Activated naive CD4-positive, alpha-beta T cell treated with anti-CD3 and anti-CD28 coated beads for 36 hours (primary cell): ENCODE measurements at regions of chr3 and their contacts with region 1.

Region 1: GRCh38 chr3:169863458-169863899 is 6.3 kb downstream of the LRRC31 start:
- DNase-seq: peak; percentile 86
- H3K4me3 Mint-ChIP-seq: no peak overlapping the region
- H3K27ac Mint-ChIP-seq: no peak overlapping the region
- H3K4me1 Mint-ChIP-seq: peaks cover 25% of the 10 kb centered on the region
- H3K27me3 Mint-ChIP-seq: no peaks in the 10 kb centered on the region

Region 2: DNA sequence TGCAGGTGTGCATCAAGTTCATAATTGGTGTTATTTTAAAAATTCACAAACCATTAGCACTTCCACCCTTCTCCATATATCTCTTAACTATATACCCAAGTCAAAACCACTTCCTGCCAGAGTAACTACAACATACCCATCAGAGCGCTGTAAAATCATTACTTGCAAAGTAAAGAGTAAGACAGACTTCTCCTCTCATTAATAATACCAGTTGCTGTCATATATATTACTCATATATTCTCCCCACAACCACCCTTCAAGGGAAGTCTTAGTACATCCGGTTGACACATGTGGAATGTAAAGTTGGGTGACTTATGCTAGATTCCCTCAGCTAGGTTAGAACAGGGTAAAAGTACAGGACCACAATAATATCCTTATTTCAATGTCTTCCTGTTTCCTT is 104.2 kb before region 1 on chr3:
- CTCF ChIA-PET with region 1: interaction called, 4 read pairs
- intact Hi-C with region 1: loop called (anchors 1 kb)
- DNase-seq: peak; percentile 24
- H3K4me3 Mint-ChIP-seq: no peak overlapping the region
- H3K27ac Mint-ChIP-seq: peak overlapping the region; percentile 62
- H3K4me1 Mint-ChIP-seq: peaks cover 25% of the 10 kb centered on the region
- H3K27me3 Mint-ChIP-seq: no peaks in the 10 kb centered on the region

Region 3: DNA sequence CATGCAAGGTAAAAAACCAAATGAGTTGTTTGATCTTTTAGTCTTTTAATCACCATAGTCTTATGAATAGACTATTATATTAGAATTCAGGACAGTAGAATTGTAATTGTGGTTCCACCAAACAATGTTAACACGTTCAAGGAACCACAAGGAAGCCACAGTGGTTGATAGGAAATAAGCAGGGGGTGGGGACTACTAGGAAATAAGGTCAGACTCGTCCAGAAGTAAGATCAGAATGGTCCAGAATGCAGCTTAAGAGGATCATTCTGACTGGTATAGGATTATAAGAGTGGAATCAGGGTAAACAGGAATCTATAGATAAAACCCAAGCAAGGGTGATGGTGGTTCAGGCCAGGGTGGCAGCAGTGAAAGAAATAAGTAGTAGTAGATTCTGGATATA is 82.7 kb before region 1 on chr3:
- CTCF ChIA-PET with region 1: no interaction called
- intact Hi-C with region 1: no loop called
- DNase-seq: no peak
- H3K4me3 Mint-ChIP-seq: no peak overlapping the region
- H3K27ac Mint-ChIP-seq: no peak overlapping the region
- H3K4me1 Mint-ChIP-seq: peaks cover 36% of the 10 kb centered on the region
- H3K27me3 Mint-ChIP-seq: no peaks in the 10 kb centered on the region

Region 4: GRCh38 chr3:169812332-169813235 is 50.9 kb before region 1 on chr3 and contains the starts of genes LRRC34 and LRRIQ4:
- CTCF ChIA-PET with region 1: interaction called, 4 read pairs
- intact Hi-C with region 1: loop called (anchors 1 kb)
- DNase-seq: peak; percentile 91
- H3K4me3 Mint-ChIP-seq: peak within 1 kb of the TSS; percentile 82
- H3K27ac Mint-ChIP-seq: peak within 1 kb of the TSS; percentile 79
- H3K4me1 Mint-ChIP-seq: peaks cover 19% of the 10 kb centered on the region
- H3K27me3 Mint-ChIP-seq: no peaks in the 10 kb centered on the region
- total RNA-seq, gene LRRC34: 3.8 to 3.9 TPM
- total RNA-seq, gene LRRIQ4: 0.12 TPM in 1 of 2 experiments, not detected in the other

Region 5: GRCh38 chr3:170021083-170021482 is 157.6 kb after region 1 on chr3:
- CTCF ChIA-PET with region 1: interaction called, 12 read pairs
- intact Hi-C with region 1: loop called (anchors 1 kb)
- DNase-seq: no peak
- H3K4me3 Mint-ChIP-seq: no peak overlapping the region
- H3K27ac Mint-ChIP-seq: no peak overlapping the region
- H3K4me1 Mint-ChIP-seq: peaks cover 21% of the 10 kb centered on the region
- H3K27me3 Mint-ChIP-seq: no peaks in the 10 kb centered on the region

Region 6: DNA sequence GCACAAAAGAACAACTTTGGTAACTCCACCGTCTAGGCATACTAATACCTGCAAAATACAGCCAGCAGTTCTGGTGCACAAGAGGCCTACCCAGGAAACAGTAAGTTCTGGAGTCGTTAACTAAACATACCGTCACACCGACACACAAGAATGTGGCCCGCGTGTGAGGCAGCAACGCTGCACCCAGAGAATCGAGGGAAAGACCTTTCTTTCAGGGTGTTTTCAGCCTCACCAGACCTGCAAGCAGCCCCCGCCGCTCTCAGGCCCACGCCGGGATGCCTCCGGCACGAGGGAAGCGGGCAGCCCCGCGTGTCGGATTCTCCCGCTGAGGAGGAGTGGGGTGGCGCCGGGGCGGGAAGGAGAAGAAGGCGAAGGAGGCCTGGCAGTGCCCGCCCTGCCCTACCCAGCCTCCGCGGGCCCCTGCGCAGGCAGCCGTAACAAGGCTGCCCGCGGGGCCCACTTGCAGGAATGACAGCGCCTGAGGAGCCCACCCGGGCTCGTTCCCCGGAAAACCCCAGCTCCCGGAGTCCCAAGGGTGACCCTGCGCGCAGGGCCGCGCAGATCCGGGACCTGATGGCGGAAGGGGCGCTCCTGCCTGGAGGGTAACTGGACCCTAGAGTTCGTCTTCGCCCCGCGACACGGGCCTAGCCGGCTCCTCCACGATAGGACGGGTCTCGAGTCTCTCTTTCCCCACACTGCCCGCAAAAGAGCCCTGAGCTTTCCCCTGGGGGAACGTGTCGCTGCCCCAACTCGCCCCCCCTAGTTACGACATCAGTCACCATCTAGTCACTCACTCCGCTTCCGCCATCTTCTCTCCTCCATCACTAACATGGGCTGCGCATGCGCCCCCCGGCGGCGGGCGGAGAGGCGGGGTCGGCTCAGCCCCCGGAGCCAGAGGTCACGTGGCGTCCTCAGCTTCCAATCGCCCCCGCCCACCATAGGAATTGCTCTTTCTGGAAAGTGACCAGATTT is 317.7 kb after region 1 on chr3 and contains the start of gene PHC3:
- CTCF ChIA-PET with region 1: interaction called, 3 read pairs
- intact Hi-C with region 1: loop called (anchors 2 kb)
- DNase-seq: peak; percentile 93
- H3K4me3 Mint-ChIP-seq: peak within 1 kb of the TSS; percentile 97
- H3K27ac Mint-ChIP-seq: peak within 1 kb of the TSS; percentile 100
- H3K4me1 Mint-ChIP-seq: peaks cover 23% of the 10 kb centered on the region
- H3K27me3 Mint-ChIP-seq: no peaks in the 10 kb centered on the region
- total RNA-seq, gene PHC3: 48.7 to 50.4 TPM

Region 7: DNA sequence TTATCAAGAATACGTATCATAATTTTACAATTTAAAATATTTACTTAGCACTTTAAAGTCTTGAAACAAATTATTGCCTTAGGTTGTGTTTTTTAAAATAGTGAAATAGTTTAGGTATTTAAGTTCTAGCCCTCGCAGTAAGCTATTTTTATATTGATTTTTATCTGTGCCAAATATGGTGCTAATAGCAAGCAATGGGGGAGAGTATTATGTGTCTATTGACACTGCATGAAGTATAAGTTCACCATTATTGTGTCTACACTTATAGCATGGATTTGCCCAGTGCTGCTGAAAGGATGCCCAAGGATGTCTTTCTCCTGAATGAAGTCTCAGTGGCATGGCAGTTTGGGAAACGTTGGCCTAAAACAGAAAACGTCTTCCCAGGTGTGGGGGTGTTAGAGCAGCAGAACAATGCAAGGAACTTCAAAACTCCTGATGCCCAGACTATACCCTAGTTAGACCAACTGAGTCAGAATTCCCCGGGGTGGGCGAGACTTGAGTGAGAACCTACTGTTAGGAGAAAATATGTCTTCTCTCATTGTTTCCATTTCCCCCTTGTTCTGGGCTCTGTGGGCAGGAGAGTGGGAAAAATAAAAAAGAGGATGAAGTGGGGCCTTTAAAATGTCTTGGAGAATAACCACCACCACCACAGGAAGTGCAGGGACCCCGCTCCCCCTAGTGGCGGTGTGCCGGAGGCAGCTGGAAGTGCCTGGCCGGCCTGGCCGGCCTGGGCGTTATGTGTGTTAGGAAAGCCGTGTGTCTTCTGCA is 826.6 kb after region 1 on chr3:
- CTCF ChIA-PET with region 1: no interaction called
- intact Hi-C with region 1: loop called (anchors 10 kb)
- DNase-seq: peak; percentile 59
- H3K4me3 Mint-ChIP-seq: no peak overlapping the region
- H3K27ac Mint-ChIP-seq: no peak overlapping the region
- H3K4me1 Mint-ChIP-seq: peaks cover 3% of the 10 kb centered on the region
- H3K27me3 Mint-ChIP-seq: no peaks in the 10 kb centered on the region